CD14-positive monocyte (primary cell): ENCODE measurements at regions of chr2 and their contacts with region 1.

Region 1: DNA sequence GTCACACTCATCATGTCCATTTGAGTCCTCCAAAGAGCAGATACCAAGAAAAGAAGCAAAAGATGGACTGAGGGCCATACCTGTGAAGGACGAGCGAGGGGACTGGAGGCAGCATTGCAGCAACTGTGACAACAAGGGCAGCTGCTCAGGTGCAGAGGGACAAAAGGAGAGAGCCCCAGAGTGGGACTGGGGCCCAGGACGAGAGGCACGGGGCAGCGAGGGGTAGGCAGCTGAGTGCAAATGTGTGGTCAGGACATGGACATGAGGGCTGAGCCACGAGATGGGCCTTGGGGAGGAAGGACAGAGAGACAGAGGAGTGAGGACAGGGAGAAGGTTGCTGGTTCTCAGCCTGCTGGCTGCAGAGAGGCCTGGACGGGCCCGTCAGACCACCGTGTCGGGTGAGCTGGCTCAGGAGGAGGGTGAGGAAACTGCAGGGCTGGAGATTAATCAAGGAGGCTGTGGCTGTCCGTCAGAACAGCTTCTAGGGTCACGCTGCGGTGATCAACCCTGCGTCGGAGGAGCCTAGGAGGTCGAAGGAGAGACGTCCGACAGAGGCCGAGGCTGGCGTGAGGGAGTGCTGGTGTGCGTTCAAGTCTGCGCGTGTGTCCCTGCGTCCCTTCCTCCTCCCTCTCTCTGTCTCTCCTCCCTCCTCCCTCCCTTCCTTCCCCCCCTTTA is 206.8 kb upstream of the HDAC4 start:
- DNase-seq: no peak
- H3K4me3 ChIP-seq: peak overlapping the region in 1 of 3 experiments; percentile 30
- H3K4me3 Mint-ChIP-seq: peak overlapping the region in 1 of 2 donors; percentile 73
- H3K27ac ChIP-seq: peak overlapping the region; percentile 50 to 88
- H3K27ac Mint-ChIP-seq: peak overlapping the region; percentile 51 to 92 (median 83)
- H3K4me1 ChIP-seq: peaks cover 52 to 64% of the 10 kb centered on the region in 2 donors
- H3K4me1 Mint-ChIP-seq: peaks cover 53% of the 10 kb centered on the region
- H3K27me3 ChIP-seq: no peaks in the 10 kb centered on the region
- H3K27me3 Mint-ChIP-seq: peaks cover 0 to 3% (median 1%) of the 10 kb centered on the region in 3 donors
- CTCF ChIP-seq: no peak

Region 2: DNA sequence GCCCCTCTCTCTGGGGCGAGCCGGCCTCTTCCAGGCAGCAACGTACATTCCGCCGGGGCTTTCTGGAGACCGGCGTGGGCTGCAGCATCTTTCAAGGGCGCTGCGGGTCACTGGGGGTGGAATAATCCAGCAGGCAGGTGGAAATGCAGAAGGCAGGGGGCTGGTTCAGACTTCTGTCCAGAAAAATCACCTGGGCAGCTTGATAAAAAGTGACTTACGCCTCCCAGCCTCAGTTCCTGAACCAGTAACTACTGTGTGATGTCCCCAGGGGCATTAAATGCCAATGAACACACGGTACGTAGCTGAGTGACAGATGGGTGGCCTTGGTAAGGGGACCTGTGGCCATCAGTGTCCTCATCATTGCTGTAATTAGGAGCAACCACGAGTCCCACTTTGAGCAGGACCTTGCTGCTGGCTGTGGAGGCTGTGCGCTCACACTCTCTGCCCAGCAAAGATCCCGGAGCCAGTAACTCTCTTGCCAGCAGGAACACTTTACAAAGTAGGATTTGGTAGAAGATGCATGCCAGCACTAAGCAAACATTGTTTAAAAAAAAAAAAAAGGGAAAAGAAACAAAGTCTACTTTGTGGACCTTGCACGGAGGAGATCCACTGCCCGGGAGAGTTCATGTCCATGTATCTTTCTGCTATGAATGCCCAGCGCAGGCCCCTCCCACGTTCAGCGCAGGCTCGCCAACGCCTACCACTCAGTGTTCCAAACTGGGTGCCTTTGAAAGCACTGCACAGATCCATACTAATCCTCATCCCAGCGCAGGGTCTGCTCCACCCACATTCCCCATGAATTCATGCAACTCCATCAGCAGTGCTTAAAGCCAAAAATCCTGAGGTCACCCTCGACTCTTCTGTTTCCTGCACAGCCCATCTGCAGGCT is 384.1 kb before region 1 on chr2:
- intact Hi-C with region 1: loop called in 1 of 2 experiments (anchors 5 kb)
- DNase-seq: no peak
- H3K4me3 ChIP-seq: peak overlapping the region in 1 of 3 experiments; percentile 65
- H3K4me3 Mint-ChIP-seq: peak overlapping the region; percentile 74 to 82
- H3K27ac ChIP-seq: peak overlapping the region; percentile 92 to 100
- H3K27ac Mint-ChIP-seq: peak overlapping the region; percentile 97 to 100 (median 100)
- H3K4me1 ChIP-seq: peaks cover 90 to 91% of the 10 kb centered on the region in 2 donors
- H3K4me1 Mint-ChIP-seq: peaks cover 93% of the 10 kb centered on the region
- H3K27me3 ChIP-seq: no peaks in the 10 kb centered on the region
- H3K27me3 Mint-ChIP-seq: peaks cover 0 to 2% (median 0%) of the 10 kb centered on the region in 3 donors
- CTCF ChIP-seq: no peak

Region 3: GRCh38 chr2:239544143-239544917 is 63.3 kb before region 1 on chr2:
- intact Hi-C with region 1: no loop called
- DNase-seq: no peak
- H3K4me3 ChIP-seq: no peak overlapping the region
- H3K4me3 Mint-ChIP-seq: no peak overlapping the region
- H3K27ac ChIP-seq: no peak overlapping the region
- H3K27ac Mint-ChIP-seq: no peak overlapping the region
- H3K4me1 ChIP-seq: no peaks in the 10 kb centered on the region
- H3K4me1 Mint-ChIP-seq: peaks cover 2% of the 10 kb centered on the region
- H3K27me3 ChIP-seq: no peaks in the 10 kb centered on the region
- H3K27me3 Mint-ChIP-seq: peaks cover 13 to 39% (median 21%) of the 10 kb centered on the region in 3 donors
- CTCF ChIP-seq: no peak

Region 4: DNA sequence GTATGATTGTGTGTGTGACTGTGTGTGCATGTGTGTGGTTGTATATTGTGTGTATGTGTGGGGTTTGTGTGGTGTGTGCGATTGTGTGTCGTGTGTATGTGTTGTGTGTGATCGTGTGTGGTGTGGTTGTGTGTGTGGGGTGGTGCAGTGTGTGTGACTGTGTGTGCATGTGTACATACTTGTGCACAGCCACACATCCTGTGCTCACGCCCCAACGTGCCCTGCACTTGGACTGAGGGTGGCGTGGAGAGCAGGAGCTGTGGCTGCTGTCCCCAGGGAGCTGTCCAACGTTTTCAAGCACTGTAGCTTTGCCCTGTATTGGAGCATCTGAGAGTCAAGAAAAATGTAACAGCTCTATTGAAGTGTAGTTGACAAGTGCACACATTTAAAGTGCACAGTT is 36.4 kb after region 1 on chr2:
- intact Hi-C with region 1: no loop called
- DNase-seq: peak in 1 of 3 donors; percentile 35
- H3K4me3 ChIP-seq: no peak overlapping the region
- H3K4me3 Mint-ChIP-seq: no peak overlapping the region
- H3K27ac ChIP-seq: no peak overlapping the region
- H3K27ac Mint-ChIP-seq: no peak overlapping the region
- H3K4me1 ChIP-seq: peaks cover 9 to 11% of the 10 kb centered on the region in 2 donors
- H3K4me1 Mint-ChIP-seq: peaks cover 8% of the 10 kb centered on the region
- H3K27me3 ChIP-seq: no peaks in the 10 kb centered on the region
- H3K27me3 Mint-ChIP-seq: peaks cover 2 to 11% (median 3%) of the 10 kb centered on the region in 3 donors
- CTCF ChIP-seq: no peak

Region 5: DNA sequence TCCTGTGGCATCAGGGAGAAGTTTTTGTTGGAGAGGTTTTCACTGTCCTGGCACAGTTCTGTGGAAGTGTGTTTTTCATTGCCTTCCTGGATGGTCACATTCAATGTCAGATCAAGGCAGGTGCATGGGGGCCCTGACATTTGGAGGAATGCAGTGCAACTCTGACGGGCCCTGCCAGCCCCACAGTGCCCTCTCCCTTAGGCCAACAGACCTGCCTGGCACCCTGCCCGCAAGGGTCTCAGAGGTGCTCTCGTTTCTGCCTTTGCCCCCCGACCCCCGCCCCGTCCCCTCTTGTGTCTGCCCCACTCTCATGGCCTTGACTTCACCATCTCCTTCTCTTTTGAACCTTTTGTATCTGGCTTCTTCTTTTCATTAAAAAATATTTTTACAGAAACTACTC is 50.3 kb after region 1 on chr2:
- intact Hi-C with region 1: loop called (anchors 5 kb)
- DNase-seq: no peak
- H3K4me3 ChIP-seq: no peak overlapping the region
- H3K4me3 Mint-ChIP-seq: peak overlapping the region in 1 of 2 donors; percentile 24
- H3K27ac ChIP-seq: no peak overlapping the region
- H3K27ac Mint-ChIP-seq: peak overlapping the region in 1 of 7 donors; percentile 15
- H3K4me1 ChIP-seq: peaks cover 42 to 51% of the 10 kb centered on the region in 2 donors
- H3K4me1 Mint-ChIP-seq: peaks cover 55% of the 10 kb centered on the region
- H3K27me3 ChIP-seq: peaks cover 2 to 3% of the 10 kb centered on the region in 2 donors
- H3K27me3 Mint-ChIP-seq: peaks cover 7 to 14% (median 7%) of the 10 kb centered on the region in 3 donors
- CTCF ChIP-seq: no peak